BJ (cell line): ENCODE measurements at regions of chr9 and their contacts with region 1.

Region 1: GRCh38 chr9:15135164-15135792 is 171.7 kb downstream of the TTC39B start:
- DNase-seq: no peak
- H3K4me3 ChIP-seq: no peak overlapping the region
- H3K27me3 ChIP-seq: no peaks in the 10 kb centered on the region
- CTCF ChIP-seq: peak; percentile 90

Region 2: DNA sequence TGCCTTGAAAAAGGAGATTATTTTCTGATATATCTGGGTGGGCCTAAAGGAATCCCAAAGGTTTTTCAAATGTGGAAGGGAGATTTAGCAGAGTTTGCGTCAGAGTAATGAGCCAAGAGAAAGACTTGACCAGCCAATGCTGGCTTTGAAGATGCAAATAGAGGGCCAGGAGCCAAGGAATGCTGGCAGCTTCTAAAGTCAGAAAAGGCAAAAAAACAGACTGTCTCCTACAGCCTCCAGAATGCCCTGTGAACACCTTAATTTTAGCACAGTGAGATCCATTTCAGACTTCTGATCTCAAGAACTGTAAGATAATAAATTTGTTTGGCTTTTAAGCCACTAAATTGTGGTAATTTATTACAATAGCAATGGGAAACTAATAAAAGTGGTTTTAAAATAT is 102.4 kb before region 1 on chr9:
- CTCF ChIA-PET with region 1: no interaction called
- POLR2A ChIA-PET with region 1: no interaction called
- DNase-seq: no peak
- H3K4me3 ChIP-seq: no peak overlapping the region
- H3K27me3 ChIP-seq: no peaks in the 10 kb centered on the region
- CTCF ChIP-seq: no peak

Region 3: GRCh38 chr9:15116130-15116580 is 19.1 kb before region 1 on chr9:
- CTCF ChIA-PET with region 1: interaction called, 10 read pairs
- POLR2A ChIA-PET with region 1: no interaction called
- DNase-seq: no peak
- H3K4me3 ChIP-seq: no peak overlapping the region
- H3K27me3 ChIP-seq: no peaks in the 10 kb centered on the region
- CTCF ChIP-seq: no peak